Activated CD4-positive, alpha-beta memory T cell treated with anti-CD3 and anti-CD28 coated beads for 36 hours (primary cell): ENCODE measurements at regions of chr13 and their contacts with region 1.

Region 1: GRCh38 chr13:94419304-94419924 is 60.1 kb downstream of the DCT start:
- DNase-seq: peak; percentile 68
- H3K4me3 Mint-ChIP-seq: no peak overlapping the region
- H3K27ac Mint-ChIP-seq: peak overlapping the region; percentile 84
- H3K4me1 Mint-ChIP-seq: peaks cover 27% of the 10 kb centered on the region
- H3K27me3 Mint-ChIP-seq: peaks cover 15% of the 10 kb centered on the region

Region 2: DNA sequence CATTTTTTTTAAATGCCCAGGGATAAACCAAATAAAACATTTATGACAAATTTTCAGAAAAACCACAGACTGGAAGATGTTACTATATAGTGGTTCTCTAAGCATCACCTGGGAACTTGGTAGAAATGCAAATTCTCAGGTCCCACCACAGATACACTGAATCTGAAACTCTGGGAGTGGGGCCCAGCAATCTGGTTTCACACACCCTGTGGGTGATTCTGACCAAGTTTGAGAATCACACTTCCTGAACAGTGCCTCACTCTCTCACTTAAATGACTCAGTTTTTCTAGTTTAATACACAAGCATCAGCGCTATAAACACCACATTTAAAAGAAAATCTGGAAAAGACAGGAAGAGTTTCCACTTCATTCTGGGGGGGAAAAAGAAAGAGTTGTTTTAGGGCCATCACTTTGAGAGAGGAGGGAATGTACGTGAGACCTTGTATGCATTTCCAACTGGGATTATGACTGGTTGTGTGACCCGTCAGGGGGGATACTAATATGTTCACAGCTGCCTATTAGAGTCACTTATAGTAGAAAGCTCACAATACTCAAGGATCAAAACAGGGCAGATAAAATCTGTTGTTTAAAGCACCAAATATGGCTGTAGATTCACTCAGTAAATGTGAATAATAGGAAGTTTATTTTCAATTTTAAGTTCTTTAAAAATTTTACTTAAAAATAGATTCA is 625.1 kb before region 1 on chr13:
- CTCF ChIA-PET with region 1: no interaction called
- POLR2A ChIA-PET with region 1: no interaction called
- intact Hi-C with region 1: loop called (anchors 1 kb)
- DNase-seq: peak; percentile 80
- H3K4me3 Mint-ChIP-seq: no peak overlapping the region
- H3K27ac Mint-ChIP-seq: no peak overlapping the region
- H3K4me1 Mint-ChIP-seq: peaks cover 7% of the 10 kb centered on the region
- H3K27me3 Mint-ChIP-seq: peaks cover 16% of the 10 kb centered on the region

Region 3: GRCh38 chr13:94327318-94327717 is 92.1 kb before region 1 on chr13:
- CTCF ChIA-PET with region 1: no interaction called
- POLR2A ChIA-PET with region 1: no interaction called
- intact Hi-C with region 1: loop called (anchors 1 kb)
- DNase-seq: no peak
- H3K4me3 Mint-ChIP-seq: no peak overlapping the region
- H3K27ac Mint-ChIP-seq: peak overlapping the region; percentile 50
- H3K4me1 Mint-ChIP-seq: peaks cover 75% of the 10 kb centered on the region
- H3K27me3 Mint-ChIP-seq: peaks cover 13% of the 10 kb centered on the region

Region 4: GRCh38 chr13:94435604-94436226 is 16.3 kb after region 1 on chr13:
- CTCF ChIA-PET with region 1: interaction called, 18 read pairs
- POLR2A ChIA-PET with region 1: no interaction called
- intact Hi-C with region 1: loop called (anchors 1 kb)
- DNase-seq: no peak
- H3K4me3 Mint-ChIP-seq: no peak overlapping the region
- H3K27ac Mint-ChIP-seq: no peak overlapping the region
- H3K4me1 Mint-ChIP-seq: peaks cover 17% of the 10 kb centered on the region
- H3K27me3 Mint-ChIP-seq: peaks cover 3% of the 10 kb centered on the region

Region 5: GRCh38 chr13:94480672-94481145 is 61.3 kb after region 1 on chr13:
- CTCF ChIA-PET with region 1: no interaction called
- POLR2A ChIA-PET with region 1: no interaction called
- intact Hi-C with region 1: no loop called
- DNase-seq: no peak
- H3K4me3 Mint-ChIP-seq: no peak overlapping the region
- H3K27ac Mint-ChIP-seq: no peak overlapping the region
- H3K4me1 Mint-ChIP-seq: peaks cover 2% of the 10 kb centered on the region
- H3K27me3 Mint-ChIP-seq: peaks cover 2% of the 10 kb centered on the region

Region 6: DNA sequence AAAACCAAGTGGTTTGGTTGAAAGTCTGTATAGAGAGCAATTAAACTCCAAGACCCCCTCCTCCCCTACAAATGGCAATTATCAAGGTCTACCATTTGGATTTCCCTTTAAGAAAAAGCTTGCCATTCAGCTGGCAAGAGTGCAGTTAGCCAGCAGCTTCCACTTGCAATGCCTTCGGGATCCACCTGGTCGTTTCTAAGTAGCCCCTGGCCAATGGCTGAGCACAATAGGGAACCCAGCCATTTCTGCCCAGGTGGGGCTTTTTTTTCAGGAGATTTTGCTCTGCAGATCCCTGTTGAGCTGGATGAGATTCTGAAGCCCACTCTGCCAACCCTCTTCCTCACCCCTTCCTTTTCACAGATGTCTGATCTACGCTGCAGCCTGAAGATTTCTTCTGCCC is 150.2 kb after region 1 on chr13:
- CTCF ChIA-PET with region 1: no interaction called
- POLR2A ChIA-PET with region 1: no interaction called
- intact Hi-C with region 1: no loop called
- DNase-seq: no peak
- H3K4me3 Mint-ChIP-seq: no peak overlapping the region
- H3K27ac Mint-ChIP-seq: no peak overlapping the region
- H3K4me1 Mint-ChIP-seq: no peaks in the 10 kb centered on the region
- H3K27me3 Mint-ChIP-seq: no peaks in the 10 kb centered on the region

Region 7: GRCh38 chr13:94601446-94602431 is 182.3 kb after region 1 on chr13 and contains the start of gene GPR180:
- CTCF ChIA-PET with region 1: no interaction called
- POLR2A ChIA-PET with region 1: no interaction called
- intact Hi-C with region 1: loop called (anchors 2 kb)
- DNase-seq: peak; percentile 95
- H3K4me3 Mint-ChIP-seq: peak within 1 kb of the TSS; percentile 88
- H3K27ac Mint-ChIP-seq: peak within 1 kb of the TSS; percentile 87
- H3K4me1 Mint-ChIP-seq: peaks cover 29% of the 10 kb centered on the region
- H3K27me3 Mint-ChIP-seq: no peaks in the 10 kb centered on the region
- total RNA-seq, gene GPR180: 9.1 to 9.7 TPM

Region 8: DNA sequence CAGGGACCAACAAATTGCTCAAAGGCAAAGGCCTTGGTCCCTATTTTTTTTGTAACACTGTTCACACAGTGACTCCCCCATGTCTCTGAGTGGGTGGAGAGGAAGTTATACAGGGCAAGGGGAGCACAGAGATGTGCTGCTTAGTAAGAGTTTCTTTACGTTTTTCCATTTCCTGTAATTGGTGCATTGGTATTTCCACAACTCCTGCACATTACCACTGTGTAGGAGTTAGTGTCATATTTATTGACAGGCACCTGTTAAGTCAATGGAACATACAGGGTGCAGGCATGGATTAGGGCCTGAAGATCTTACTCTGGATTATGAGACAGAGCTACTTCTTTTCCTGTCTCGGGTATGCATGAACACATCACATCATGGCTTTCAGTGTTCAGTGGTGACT is 247.8 kb after region 1 on chr13:
- CTCF ChIA-PET with region 1: no interaction called
- POLR2A ChIA-PET with region 1: no interaction called
- intact Hi-C with region 1: loop called (anchors 1 kb)
- DNase-seq: peak; percentile 23
- H3K4me3 Mint-ChIP-seq: no peak overlapping the region
- H3K27ac Mint-ChIP-seq: peak overlapping the region; percentile 64
- H3K4me1 Mint-ChIP-seq: peaks cover 25% of the 10 kb centered on the region
- H3K27me3 Mint-ChIP-seq: peaks cover 17% of the 10 kb centered on the region

Region 9: DNA sequence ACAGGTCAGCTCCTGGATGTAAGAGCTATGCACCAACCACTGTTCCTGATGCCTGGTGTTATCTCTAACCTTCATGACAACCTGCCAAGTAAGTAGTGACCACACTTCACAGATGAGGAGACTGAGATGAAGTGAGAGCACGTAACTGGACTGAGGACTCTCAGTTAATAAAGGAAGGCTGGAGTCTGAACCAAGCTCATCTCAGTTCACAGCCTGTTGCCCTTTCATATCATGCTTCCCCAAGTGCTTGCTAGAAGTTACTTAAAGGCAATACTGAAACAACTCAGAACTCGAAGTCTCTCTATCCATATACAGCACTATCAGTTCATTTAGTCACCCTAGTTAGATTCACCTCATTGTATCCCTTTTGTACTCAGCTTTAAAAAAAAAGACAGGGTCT is 762.2 kb after region 1 on chr13:
- CTCF ChIA-PET with region 1: no interaction called
- POLR2A ChIA-PET with region 1: no interaction called
- intact Hi-C with region 1: loop called (anchors 2 kb)
- DNase-seq: no peak
- H3K4me3 Mint-ChIP-seq: no peak overlapping the region
- H3K27ac Mint-ChIP-seq: peak overlapping the region; percentile 57
- H3K4me1 Mint-ChIP-seq: peaks cover 64% of the 10 kb centered on the region
- H3K27me3 Mint-ChIP-seq: no peaks in the 10 kb centered on the region